Activated naive CD4-positive, alpha-beta T cell treated with anti-CD3 and anti-CD28 coated beads for 36 hours (primary cell): ENCODE measurements at regions of chr19 and their contacts with region 1.

Region 1: DNA sequence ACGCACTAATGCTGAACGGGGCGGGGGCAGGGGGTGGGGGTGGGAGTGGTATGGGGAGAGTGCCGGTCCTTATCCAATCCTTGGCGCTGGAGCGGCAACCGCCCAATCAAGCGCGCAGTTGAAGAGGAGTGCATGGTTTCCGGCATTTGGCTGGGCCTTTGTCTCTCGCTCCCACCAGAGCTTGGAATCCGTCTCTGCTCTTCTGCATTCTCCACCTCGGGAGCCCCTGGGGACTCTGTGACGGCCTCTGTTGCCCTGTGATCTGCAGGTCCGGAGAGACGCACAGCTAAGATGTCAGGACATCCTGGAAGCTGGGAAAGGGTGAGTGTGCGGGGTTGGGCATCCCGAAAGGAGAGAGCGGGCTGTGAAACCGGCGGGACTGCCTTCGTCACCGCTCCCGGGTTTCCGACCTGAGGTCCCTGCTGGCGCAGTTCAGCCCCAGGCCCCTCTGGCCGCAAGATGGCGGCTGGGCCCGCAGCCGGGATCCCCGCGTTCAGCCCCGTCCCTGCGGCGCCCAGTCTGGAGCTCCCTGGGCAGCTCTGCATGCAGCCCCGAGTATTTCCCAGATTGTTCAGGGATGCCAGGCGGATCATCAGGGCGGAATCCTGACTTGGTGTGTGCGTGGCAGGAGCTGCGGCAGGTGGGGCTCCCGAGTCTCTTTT is 53.6 kb upstream of the ZNF254 start:
- DNase-seq: peak; percentile 90
- H3K4me3 Mint-ChIP-seq: peak overlapping the region; percentile 99
- H3K27ac Mint-ChIP-seq: peak overlapping the region; percentile 98
- H3K4me1 Mint-ChIP-seq: peaks cover 41% of the 10 kb centered on the region
- H3K27me3 Mint-ChIP-seq: no peaks in the 10 kb centered on the region

Region 2: DNA sequence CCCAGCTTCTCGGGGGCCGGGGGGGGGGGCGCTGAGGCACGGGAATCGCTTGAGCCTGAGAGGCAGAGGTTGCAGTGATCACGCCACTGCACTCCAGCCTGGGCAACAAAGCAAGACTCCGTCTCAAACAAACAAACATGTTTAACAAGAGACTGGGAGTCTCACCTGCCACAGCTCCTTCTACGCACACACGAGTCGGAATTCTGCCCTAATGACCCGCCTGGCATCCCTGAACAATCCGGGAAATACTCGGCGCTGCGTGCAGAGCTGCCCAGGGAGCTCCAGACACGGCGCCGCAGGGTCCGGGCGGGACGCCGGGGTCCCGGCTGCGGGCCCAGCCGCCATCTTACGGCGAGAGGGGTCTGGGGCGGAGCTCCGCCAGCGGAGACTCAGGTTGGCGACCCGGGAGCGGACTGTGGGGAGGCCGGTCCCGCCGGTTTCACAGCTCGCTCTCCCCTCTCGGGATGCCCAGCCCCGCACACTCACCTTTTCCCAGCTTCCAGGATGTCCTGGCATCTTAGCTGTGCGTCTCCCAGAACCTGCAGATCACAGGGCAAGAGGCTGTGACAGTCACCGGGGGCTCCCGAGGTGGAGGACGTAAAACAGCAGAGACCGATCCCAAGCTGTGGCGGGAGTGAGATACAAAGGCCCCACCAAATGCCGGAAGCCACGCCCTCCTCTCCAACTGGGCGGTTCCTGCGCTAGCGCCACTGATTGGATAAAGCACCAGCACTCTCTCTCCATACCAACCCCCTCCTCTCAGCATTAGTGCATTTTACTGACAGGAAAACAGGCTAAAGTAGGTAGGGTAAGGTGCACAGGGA is 759.6 kb before region 1 on chr19:
- CTCF ChIA-PET with region 1: no interaction called
- intact Hi-C with region 1: loop called (anchors 5 kb)
- DNase-seq: peak; percentile 96
- H3K4me3 Mint-ChIP-seq: peak overlapping the region; percentile 93
- H3K27ac Mint-ChIP-seq: peak overlapping the region; percentile 92
- H3K4me1 Mint-ChIP-seq: peaks cover 28% of the 10 kb centered on the region
- H3K27me3 Mint-ChIP-seq: no peaks in the 10 kb centered on the region

Region 3: DNA sequence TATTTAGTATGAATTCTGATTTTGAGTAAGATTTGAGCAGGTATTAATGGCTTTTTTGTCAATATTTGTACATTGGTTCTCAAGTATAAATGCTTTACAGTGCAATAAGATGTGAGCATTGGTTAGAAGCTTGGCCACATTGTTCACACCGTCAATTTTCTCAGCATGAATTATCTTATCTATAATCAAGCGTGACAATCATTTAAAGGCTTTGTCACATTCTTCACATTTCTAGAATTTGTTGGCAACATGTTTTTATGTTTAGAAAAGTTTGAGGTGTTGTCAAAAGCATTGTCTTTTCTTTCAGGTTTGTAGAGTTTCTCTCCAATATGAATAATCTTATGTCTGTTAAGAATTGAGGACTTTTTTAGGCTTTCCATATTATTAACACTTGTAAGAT is 542.0 kb before region 1 on chr19:
- CTCF ChIA-PET with region 1: no interaction called
- intact Hi-C with region 1: no loop called
- DNase-seq: no peak
- H3K4me3 Mint-ChIP-seq: no peak overlapping the region
- H3K27ac Mint-ChIP-seq: no peak overlapping the region
- H3K4me1 Mint-ChIP-seq: no peaks in the 10 kb centered on the region
- H3K27me3 Mint-ChIP-seq: no peaks in the 10 kb centered on the region

Region 4: DNA sequence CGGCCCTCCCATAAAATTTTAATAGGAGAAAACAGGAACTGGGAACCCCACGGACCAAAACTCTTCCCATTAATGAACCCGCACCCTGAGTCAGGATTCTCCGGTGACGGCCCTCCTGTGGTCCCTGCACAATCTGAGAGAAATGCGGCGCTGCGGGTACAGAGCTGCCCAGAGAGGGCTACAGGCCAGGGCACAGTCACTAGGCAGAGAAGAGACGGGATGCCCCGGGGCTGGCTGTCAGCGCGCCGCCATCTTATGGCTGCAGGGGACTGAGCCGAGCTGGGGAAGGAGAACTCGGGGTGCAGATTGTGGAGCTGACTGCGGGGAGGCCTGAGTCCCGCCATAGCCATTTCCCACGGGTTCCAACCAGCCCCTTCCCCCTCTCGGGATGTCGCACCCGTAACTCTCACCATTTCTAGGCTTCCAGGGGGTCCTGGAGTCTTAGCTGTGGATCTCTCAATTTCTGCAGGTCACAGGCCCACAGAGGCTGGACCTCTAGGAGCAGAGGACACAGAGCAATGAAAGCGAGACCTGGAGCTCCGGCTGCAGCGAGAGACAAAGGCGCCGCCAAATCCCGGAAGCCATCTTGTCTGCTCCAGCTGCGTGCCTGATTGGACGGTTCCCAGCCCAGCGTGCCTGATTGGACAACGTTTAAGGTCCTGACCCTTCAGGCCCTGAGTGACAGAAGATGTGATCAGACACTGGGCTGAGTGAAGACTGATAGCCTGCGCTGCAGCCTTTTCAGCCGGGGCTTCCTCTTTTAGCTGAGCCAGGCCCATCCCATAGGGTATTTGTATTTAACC is 346.6 kb before region 1 on chr19 and contains the start of gene ZNF675:
- CTCF ChIA-PET with region 1: no interaction called
- intact Hi-C with region 1: loop called (anchors 2 kb)
- DNase-seq: peak; percentile 94
- H3K4me3 Mint-ChIP-seq: peak within 1 kb of the TSS; percentile 96
- H3K27ac Mint-ChIP-seq: peak within 1 kb of the TSS; percentile 97
- H3K4me1 Mint-ChIP-seq: peaks cover 44% of the 10 kb centered on the region
- H3K27me3 Mint-ChIP-seq: no peaks in the 10 kb centered on the region
- total RNA-seq, gene ZNF675: 23.8 to 25.2 TPM

Region 5: GRCh38 chr19:24004166-24004565 is 29.3 kb before region 1 on chr19:
- CTCF ChIA-PET with region 1: no interaction called
- intact Hi-C with region 1: no loop called
- DNase-seq: no peak
- H3K4me3 Mint-ChIP-seq: no peak overlapping the region
- H3K27ac Mint-ChIP-seq: no peak overlapping the region
- H3K4me1 Mint-ChIP-seq: no peaks in the 10 kb centered on the region
- H3K27me3 Mint-ChIP-seq: no peaks in the 10 kb centered on the region

Region 6: DNA sequence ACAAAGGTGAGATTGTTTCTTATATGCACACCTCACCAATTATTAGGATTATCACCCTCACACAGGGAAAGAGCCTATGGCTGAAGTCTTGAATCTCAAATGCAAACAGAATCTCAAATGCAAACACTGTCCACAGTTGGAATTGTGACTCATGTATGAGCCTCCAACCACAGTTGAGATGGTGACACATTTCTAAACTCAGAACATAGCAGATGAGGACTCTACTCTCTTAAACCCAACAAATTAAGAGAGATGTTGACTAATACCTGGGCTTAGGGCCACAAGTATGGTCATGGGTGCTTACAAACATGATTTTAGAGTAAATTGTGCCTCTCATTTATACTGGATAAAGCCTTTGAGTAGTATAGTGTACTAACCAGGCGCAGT is 21.1 kb after region 1 on chr19:
- CTCF ChIA-PET with region 1: interaction called, 4 read pairs
- intact Hi-C with region 1: loop called (anchors 1 kb)
- DNase-seq: no peak
- H3K4me3 Mint-ChIP-seq: no peak overlapping the region
- H3K27ac Mint-ChIP-seq: peak overlapping the region; percentile 18
- H3K4me1 Mint-ChIP-seq: peaks cover 11% of the 10 kb centered on the region
- H3K27me3 Mint-ChIP-seq: no peaks in the 10 kb centered on the region